ENCODE measurements at regions of chr9 and their contacts with region 1.

Region 1: DNA sequence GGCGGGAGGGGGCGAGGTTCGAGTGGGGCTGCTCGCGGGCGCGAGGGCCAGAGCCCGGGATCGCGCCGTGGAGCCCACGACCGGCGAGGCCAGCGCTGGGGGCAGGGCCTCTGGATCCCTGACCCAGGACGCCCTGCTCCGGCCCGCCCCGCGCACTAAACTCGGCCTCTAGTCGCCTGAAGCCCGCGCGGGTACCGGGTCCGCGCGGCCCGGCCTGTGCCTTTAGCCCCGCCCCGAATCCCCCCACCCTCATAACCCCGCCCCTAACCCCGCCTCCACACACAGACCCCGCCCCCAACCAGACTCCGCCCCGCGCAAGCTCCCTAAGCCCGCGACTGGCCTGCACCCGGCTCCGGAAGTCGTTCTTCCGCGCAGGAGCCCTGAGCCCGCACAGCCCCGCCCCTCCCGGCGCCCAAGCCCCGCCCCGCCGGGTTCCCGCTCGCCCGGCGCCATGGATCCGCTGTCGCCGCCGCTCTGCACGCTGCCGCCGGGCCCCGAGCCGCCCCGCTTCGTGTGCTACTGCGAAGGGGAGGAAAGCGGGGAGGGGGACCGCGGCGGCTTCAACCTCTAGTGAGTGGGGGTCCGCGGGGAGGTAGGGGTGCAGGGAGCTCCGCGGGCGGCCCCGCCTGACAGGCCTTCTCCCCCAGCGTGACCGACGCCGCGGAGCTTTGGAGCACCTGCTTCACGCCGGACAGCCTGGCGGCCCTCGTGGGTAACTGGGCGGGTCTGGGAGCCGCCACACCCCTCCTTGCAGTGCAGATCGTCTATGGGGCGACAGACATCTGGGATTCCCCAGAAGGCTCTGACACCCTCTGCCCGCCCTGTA is at the start of gene PAXX:
- DNase-seq: peak; percentile 96
- ATAC-seq: peak; percentile 87
- H3K4me3 Mint-ChIP-seq: peak within 1 kb of the TSS; percentile 84
- H3K27ac Mint-ChIP-seq: peak within 1 kb of the TSS; percentile 87
- H3K4me1 Mint-ChIP-seq: peaks cover 37% of the 10 kb centered on the region
- H3K27me3 Mint-ChIP-seq: peaks cover 15% of the 10 kb centered on the region
- total RNA-seq, gene PAXX: 80.6 to 85.2 TPM

Region 2: GRCh38 chr9:136949817-136950655 is 42.2 kb before region 1 on chr9:
- CTCF ChIA-PET with region 1: interaction called, 16 read pairs
- POLR2A ChIA-PET with region 1: no interaction called
- DNase-seq: peak; percentile 98
- ATAC-seq: peak; percentile 97
- H3K4me3 Mint-ChIP-seq: peak overlapping the region; percentile 84
- H3K27ac Mint-ChIP-seq: peak overlapping the region; percentile 90
- H3K4me1 Mint-ChIP-seq: peaks cover 17% of the 10 kb centered on the region
- H3K27me3 Mint-ChIP-seq: no peaks in the 10 kb centered on the region

Region 3: DNA sequence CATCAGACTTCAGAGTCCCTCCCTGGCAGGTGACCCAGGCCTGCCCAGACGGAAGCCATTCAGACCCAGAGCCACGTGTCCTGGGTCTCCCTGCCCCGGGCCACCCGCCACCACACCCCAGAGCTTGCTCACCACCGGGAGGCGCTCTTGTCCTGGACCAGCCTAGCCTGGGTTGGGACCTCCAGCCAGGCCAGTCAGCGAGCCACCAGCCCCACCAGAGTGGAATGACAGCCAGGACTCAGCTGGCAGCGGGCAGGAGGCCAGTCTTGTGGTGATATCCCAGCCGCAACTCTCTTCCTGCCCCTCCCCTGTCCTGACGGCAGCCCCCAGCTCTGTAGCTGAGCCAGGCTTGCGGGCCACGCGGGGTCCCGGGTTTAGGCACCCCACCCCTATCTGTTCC is 16.6 kb before region 1 on chr9:
- CTCF ChIA-PET with region 1: interaction called, 8 read pairs
- POLR2A ChIA-PET with region 1: interaction called, 10 read pairs
- DNase-seq: peak; percentile 47
- ATAC-seq: no peak
- H3K4me3 Mint-ChIP-seq: peak overlapping the region; percentile 38
- H3K27ac Mint-ChIP-seq: peak overlapping the region; percentile 60
- H3K4me1 Mint-ChIP-seq: peaks cover 25% of the 10 kb centered on the region
- H3K27me3 Mint-ChIP-seq: no peaks in the 10 kb centered on the region

Region 4: DNA sequence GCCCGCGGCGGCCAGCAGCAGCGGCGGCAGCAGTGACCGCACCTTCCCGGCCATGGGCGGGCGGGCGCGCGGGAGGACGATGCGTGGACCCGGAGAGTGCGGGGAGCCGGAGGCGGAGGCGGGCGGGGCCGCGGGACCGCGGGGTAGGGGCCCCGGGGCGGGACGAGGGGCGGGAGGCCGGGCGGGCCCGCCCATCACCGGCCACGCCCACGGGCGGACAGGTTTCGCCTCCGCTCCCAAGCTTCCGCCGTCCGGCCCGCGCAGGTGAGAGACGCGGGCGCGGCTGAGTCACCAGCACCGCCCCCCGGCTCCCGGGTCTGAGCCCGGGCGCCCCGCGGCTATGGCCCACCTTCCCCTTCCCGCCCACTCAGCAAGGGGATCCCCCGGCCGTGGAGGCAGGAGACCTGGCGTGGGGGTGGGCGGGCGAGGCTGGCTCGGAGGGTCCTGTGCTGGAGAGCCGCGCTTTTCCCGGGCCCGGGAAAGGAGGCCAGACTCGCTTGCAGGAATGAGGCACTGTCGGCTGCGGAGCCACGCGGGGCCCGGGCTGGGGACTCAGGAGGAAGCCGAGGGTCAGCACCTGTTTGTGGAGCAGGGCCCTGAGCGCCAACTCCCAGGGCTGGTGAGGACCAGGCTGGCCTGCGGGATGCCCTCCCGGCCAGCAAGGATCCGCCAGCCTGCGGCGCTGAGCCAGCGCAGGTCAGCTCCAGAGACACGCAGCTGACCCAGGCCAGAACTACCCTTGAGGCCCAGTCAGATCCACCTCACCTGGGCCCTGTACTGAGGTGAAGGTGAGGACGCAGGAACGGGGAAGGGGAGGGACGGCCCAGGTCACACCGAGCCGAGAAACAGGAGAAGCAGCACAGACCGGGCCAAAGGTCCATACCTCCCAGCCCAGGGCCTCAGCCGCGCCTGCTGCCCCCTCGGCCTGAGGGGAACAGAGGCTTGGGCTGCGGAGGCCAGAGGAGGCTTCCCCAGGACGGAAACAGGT is 62.0 kb after region 1 on chr9 and contains the start of gene ENTPD2:
- CTCF ChIA-PET with region 1: no interaction called
- POLR2A ChIA-PET with region 1: no interaction called
- DNase-seq: peak; percentile 52
- ATAC-seq: peak; percentile 67
- H3K4me3 Mint-ChIP-seq: no peak within 1 kb of the TSS
- H3K27ac Mint-ChIP-seq: no peak within 1 kb of the TSS
- H3K4me1 Mint-ChIP-seq: no peaks in the 10 kb centered on the region
- H3K27me3 Mint-ChIP-seq: peaks cover 27% of the 10 kb centered on the region
- total RNA-seq, gene ENTPD2: 0.34 TPM in 1 of 2 experiments, not detected in the other

Region 5: DNA sequence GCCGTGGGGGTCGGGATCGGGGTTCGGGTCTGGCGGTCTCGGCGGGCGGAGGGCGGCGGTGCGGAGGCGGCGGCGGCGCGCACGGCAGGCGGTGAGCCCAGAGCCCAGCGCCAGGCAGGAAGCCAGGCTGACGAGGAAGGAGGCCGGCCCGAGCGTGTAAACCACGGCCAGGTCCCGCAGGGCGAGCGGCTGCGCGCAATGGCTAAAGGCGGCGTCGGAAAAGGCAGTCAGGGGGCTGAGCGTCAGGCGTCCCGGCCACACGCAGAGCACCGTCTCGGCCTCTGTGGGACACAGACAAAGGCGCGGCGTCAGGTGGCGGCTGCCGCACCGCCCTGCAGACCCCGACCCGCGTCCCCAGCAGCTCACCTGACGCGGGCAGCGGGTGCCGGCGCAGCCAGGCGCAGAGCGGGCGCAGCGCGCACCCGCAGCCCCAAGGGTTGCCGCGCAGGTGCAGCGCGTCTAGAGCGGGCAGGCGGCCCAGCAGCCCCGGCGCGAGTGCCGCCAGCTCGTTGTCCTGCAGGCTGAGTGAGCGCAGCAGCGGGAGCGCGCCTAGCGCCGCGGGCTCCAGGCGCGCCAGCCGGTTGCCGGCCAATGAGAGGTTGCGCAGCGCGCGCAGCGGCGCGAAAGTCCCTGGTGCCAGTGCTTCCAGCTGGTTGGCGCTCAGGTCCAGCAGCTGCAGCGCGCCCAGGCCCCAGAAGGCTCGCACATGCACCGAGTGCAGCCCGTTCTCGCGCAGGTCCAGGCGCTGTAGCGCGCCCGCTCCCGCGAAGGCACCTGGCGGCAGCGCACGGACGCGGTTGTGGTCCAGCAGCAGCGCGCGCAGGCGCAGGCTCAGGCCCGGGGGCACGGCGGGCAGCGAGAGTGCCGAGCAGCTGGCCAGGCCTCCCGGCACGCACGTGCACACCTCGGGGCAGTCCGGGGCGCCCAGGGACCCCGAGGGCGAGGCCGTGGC is 177.0 kb after region 1 on chr9:
- CTCF ChIA-PET with region 1: no interaction called
- POLR2A ChIA-PET with region 1: no interaction called
- DNase-seq: no peak
- ATAC-seq: peak; percentile 37
- H3K4me3 Mint-ChIP-seq: peak overlapping the region; percentile 31
- H3K27ac Mint-ChIP-seq: no peak overlapping the region
- H3K4me1 Mint-ChIP-seq: peaks cover 3% of the 10 kb centered on the region
- H3K27me3 Mint-ChIP-seq: peaks cover 40% of the 10 kb centered on the region

Region 6: GRCh38 chr9:137370865-137371520 is 378.8 kb after region 1 on chr9:
- CTCF ChIA-PET with region 1: no interaction called
- POLR2A ChIA-PET with region 1: no interaction called
- DNase-seq: no peak
- ATAC-seq: no peak
- H3K4me3 Mint-ChIP-seq: no peak overlapping the region
- H3K27ac Mint-ChIP-seq: no peak overlapping the region
- H3K4me1 Mint-ChIP-seq: no peaks in the 10 kb centered on the region
- H3K27me3 Mint-ChIP-seq: no peaks in the 10 kb centered on the region

Measured in activated CD8-positive, alpha-beta T cell treated with anti-CD3 and anti-CD28 coated beads, Interleukin-2, amount 10 ng/mL, durations not matched to agents 7 days and 5 days (primary cell).